WTC11 (cell line): ENCODE measurements at regions of chr21 and their contacts with region 1.

Region 1: GRCh38 chr21:32306021-32306780 is 7.5 kb downstream of the MRAP start:
- DNase-seq: peak; percentile 91
- ATAC-seq: peak; percentile 98
- H3K4me3 Mint-ChIP-seq: peak overlapping the region; percentile 8; the same call in 1 of the 2 replicates
- H3K27ac Mint-ChIP-seq: peak overlapping the region; percentile 54
- H3K4me1 Mint-ChIP-seq: peaks cover 16% of the 10 kb centered on the region
- H3K27me3 Mint-ChIP-seq: no peaks in the 10 kb centered on the region
- CTCF ChIP-seq: peak; percentile 74

Region 2: GRCh38 chr21:32278518-32279376 is 27.5 kb before region 1 on chr21 and contains the start of gene MIS18A:
- CTCF ChIA-PET with region 1: interaction called, 16 read pairs
- POLR2A ChIA-PET with region 1: no interaction called
- DNase-seq: peak; percentile 96
- ATAC-seq: peak; percentile 92
- H3K4me3 Mint-ChIP-seq: peak within 1 kb of the TSS; percentile 99
- H3K27ac Mint-ChIP-seq: peak within 1 kb of the TSS; percentile 96
- H3K4me1 Mint-ChIP-seq: peaks cover 16% of the 10 kb centered on the region
- H3K27me3 Mint-ChIP-seq: no peaks in the 10 kb centered on the region
- CTCF ChIP-seq: no peak
- total RNA-seq, gene MIS18A: 55.9 to 60.6 TPM (median 58.4 TPM) in 3 replicates